ENCODE measurements at regions of chr20 and their contacts with region 1.

Region 1: GRCh38 chr20:45779011-45779915 is 12.4 kb downstream of the WFDC3 start:
- DNase-seq: peak; percentile 10
- ATAC-seq: peak; percentile 16
- H3K4me3 Mint-ChIP-seq: no peak overlapping the region
- H3K27ac Mint-ChIP-seq: no peak overlapping the region
- H3K4me1 Mint-ChIP-seq: peaks cover 4% of the 10 kb centered on the region
- H3K27me3 Mint-ChIP-seq: peaks cover 7% of the 10 kb centered on the region

Region 2: DNA sequence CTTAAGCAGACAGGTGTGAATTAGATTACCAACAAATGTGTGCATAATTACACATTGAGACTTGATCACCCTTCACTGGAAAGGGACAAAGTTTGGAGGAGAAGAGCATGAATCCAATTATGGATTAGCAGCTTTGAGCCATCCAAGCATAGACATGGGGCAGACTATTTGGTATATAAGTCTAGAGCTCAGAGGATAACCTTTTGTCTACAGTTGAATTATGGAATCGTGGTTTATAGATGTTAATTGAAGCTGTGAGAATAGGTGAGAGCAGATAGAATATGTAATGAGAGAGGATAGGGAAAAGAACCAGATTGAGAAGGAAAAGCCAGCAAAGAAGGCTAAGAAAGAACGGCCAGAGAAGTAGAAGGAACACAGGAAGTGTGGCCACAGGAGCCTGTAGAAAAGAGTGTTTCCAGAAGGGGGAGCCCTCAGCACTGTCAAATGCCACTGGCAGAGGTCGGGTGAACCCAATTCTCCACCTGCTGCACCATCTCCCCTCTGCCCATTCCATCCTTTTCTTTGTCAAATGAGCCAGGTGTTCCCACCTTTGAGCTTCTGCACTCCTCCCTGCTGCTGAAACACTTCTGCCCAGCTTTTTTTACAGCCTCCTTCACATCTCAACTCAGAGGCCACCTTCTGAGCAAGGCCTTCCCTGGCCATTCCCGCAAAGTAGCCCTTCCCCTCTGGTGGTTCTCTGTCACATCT is 19.8 kb after region 1 on chr20:
- CTCF ChIA-PET with region 1: interaction called, 10 read pairs
- POLR2A ChIA-PET with region 1: no interaction called
- intact Hi-C with region 1: no loop called
- DNase-seq: peak; percentile 79
- ATAC-seq: peak; percentile 95
- H3K4me3 Mint-ChIP-seq: no peak overlapping the region
- H3K27ac Mint-ChIP-seq: peak overlapping the region; percentile 45
- H3K4me1 Mint-ChIP-seq: peaks cover 7% of the 10 kb centered on the region
- H3K27me3 Mint-ChIP-seq: no peaks in the 10 kb centered on the region

Region 3: GRCh38 chr20:45842169-45842812 is 63.0 kb after region 1 on chr20:
- CTCF ChIA-PET with region 1: no interaction called
- POLR2A ChIA-PET with region 1: no interaction called
- intact Hi-C with region 1: no loop called
- DNase-seq: no peak
- ATAC-seq: no peak
- H3K4me3 Mint-ChIP-seq: no peak overlapping the region
- H3K27ac Mint-ChIP-seq: no peak overlapping the region
- H3K4me1 Mint-ChIP-seq: no peaks in the 10 kb centered on the region
- H3K27me3 Mint-ChIP-seq: no peaks in the 10 kb centered on the region

Measured in activated CD4-positive, alpha-beta T cell treated with anti-CD3 and anti-CD28 coated beads for 36 hours (primary cell).